Activated B cell treated with CpG ODN at 0.5 μM for 24 hours (primary cell): ENCODE measurements at regions of chr12 and their contacts with region 1.

Region 1: GRCh38 chr12:125657681-125658080 is 592.4 kb downstream of the AACS start:
- DNase-seq: no peak
- ATAC-seq: no peak
- H3K4me3 Mint-ChIP-seq: no peak overlapping the region
- H3K27ac Mint-ChIP-seq: no peak overlapping the region
- H3K4me1 Mint-ChIP-seq: no peaks in the 10 kb centered on the region
- H3K27me3 Mint-ChIP-seq: no peaks in the 10 kb centered on the region
- CTCF ChIP-seq: no peak

Region 2: DNA sequence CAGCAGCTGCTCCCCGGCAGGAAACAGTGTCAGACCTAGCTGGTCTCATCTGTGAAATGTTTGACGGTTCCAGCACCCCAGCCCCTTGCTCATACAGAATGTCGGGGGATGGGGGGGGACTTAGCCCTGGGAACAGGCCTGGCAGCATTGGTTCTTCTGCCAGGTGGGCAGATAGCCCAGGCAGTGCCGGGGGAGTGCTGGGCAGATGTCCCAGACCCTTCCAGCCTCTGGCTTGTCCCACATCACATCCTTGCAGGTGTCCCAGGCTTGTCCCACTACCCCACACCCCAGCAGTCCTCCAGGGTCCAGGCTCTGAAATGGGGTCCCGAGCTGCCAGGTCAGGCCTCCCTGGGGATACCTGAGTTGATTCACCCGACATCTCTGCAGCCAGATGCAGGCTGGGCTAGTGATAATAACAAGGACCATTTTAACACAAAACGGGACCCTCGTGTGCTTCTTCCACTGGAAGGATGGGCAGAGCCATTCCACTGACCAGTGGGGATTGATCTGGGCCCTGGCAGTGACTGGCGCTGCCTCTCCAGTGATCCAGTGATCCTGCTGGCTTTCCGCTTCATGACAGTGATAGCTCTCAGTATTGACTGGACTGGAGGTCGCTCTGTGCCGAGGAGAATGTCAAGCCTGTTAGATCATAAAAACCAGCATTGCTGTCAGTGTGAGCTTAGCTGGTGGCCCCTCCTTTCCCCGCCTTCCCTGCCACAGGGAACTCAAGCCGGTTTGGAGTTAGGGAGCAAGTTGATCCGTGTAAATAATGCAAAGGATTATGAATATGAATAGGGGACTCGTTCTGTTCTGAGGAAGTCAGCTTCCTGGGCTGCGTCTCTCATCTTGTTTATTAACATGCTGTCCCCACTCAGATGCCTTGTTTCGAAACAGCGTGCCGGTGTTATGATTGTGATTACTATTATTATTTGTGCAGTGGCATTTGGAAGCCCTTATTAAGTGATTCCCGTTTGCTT is 411.8 kb before region 1 on chr12:
- CTCF ChIA-PET with region 1: no interaction called
- POLR2A ChIA-PET with region 1: no interaction called
- intact Hi-C with region 1: loop called (anchors 5 kb)
- DNase-seq: no peak
- ATAC-seq: no peak
- H3K4me3 Mint-ChIP-seq: no peak overlapping the region
- H3K27ac Mint-ChIP-seq: no peak overlapping the region
- H3K4me1 Mint-ChIP-seq: no peaks in the 10 kb centered on the region
- H3K27me3 Mint-ChIP-seq: peaks cover 13% of the 10 kb centered on the region
- CTCF ChIP-seq: no peak

Region 3: DNA sequence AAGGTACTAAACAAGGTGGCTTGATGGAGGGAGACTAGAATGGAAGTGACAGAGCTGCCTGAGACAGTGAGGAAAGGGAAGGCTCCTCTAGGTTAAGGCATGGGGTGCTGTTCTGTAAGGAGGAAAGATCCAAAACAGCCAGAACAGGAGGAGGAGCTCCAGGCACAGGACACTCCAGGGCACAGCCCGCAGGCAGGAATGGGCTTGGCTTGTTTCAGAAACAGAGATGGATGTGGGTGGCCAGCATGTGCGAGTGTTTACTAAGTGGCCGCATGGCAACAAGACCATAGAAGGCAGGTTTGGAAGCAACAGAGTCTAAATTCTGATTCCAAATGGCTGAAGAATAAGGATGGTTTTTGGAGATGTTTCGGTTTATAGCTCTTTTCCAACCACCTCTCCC is 296.7 kb after region 1 on chr12:
- CTCF ChIA-PET with region 1: no interaction called
- POLR2A ChIA-PET with region 1: no interaction called
- intact Hi-C with region 1: no loop called
- DNase-seq: no peak
- ATAC-seq: no peak
- H3K4me3 Mint-ChIP-seq: no peak overlapping the region
- H3K27ac Mint-ChIP-seq: no peak overlapping the region
- H3K4me1 Mint-ChIP-seq: no peaks in the 10 kb centered on the region
- H3K27me3 Mint-ChIP-seq: no peaks in the 10 kb centered on the region
- CTCF ChIP-seq: no peak